ENCODE measurements at regions of chr13 and their contacts with region 1.

Region 1: GRCh38 chr13:27257648-27258253 is 6.4 kb downstream of the RPL21 start:
- DNase-seq: no peak
- H3K4me3 Mint-ChIP-seq: no peak overlapping the region
- H3K27ac Mint-ChIP-seq: no peak overlapping the region
- H3K4me1 Mint-ChIP-seq: peaks cover 67% of the 10 kb centered on the region
- H3K27me3 Mint-ChIP-seq: no peaks in the 10 kb centered on the region

Region 2: GRCh38 chr13:27270594-27271520 is 13.1 kb after region 1 on chr13 and contains the start of gene RASL11A:
- CTCF ChIA-PET with region 1: interaction called, 10 read pairs
- POLR2A ChIA-PET with region 1: interaction called, 8 read pairs
- DNase-seq: peak; percentile 69
- H3K4me3 Mint-ChIP-seq: peak within 1 kb of the TSS; percentile 76
- H3K27ac Mint-ChIP-seq: no peak within 1 kb of the TSS
- H3K4me1 Mint-ChIP-seq: peaks cover 12% of the 10 kb centered on the region
- H3K27me3 Mint-ChIP-seq: peaks cover 35% of the 10 kb centered on the region
- total RNA-seq, gene RASL11A: 1.9 to 2.5 TPM

Region 3: DNA sequence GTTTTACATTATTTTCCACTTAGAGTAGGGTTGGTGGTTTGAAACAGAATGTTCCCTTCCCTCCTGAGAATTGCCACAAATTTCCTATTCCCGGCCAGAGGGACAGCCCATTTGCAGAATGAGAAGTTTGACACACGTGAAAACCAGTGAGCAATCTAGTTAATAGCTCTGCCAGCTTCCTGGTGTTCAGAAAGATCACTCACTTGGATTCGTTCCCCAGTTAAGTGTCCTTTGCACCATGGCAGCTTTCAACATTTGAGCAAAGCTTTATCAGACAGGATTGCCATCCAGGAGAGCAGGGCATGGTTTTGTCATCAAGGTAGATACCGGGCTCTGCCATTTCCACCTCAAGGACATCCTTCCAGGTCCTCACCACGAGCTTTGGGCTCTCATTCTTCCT is 41.1 kb after region 1 on chr13:
- CTCF ChIA-PET with region 1: no interaction called
- POLR2A ChIA-PET with region 1: no interaction called
- DNase-seq: no peak
- H3K4me3 Mint-ChIP-seq: no peak overlapping the region
- H3K27ac Mint-ChIP-seq: no peak overlapping the region
- H3K4me1 Mint-ChIP-seq: peaks cover 13% of the 10 kb centered on the region
- H3K27me3 Mint-ChIP-seq: peaks cover 16% of the 10 kb centered on the region